CD14-positive monocyte (primary cell): ENCODE measurements at regions of chr1 and their contacts with region 1.

Region 1: DNA sequence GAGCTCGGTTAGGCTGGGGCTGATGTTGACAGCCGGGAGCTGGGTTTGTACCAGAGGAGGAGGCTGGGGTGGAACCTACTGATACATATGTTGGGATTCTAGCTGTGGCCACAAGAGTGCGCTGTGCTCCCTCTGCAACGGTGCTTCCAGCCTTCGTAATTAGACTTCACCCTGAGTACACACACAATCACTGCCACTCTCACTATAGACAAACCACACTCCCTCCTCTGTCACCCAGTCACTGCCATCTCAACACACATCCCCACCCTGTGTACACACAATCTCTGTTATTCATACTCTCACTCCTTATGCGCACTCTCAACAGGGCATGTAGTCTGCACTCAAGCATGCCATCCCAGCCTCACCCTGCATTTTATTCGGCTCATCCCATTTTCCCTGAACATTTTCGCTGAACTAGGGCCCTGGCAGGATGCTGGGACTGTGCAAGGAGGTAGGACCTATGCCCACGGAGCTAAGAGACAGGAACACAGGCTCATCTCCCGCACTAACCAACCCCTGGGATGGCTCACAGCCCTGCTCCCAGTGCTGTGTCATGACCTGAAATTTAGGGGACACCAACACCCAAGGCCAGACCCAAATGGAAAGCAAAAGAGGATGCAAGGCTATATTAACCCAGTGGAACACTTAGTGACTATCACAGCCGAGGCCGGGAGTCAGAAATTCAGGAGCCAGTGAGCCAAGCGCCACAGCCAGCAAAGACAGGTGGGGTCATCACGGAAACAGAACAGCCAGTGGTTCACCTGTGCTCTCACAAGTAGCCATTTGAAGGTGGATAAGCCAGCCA is 5.7 kb downstream of the GJB3 start:
- DNase-seq: peak; percentile 19 to 36 (median 31)
- H3K4me3 ChIP-seq: no peak overlapping the region
- H3K4me3 Mint-ChIP-seq: no peak overlapping the region
- H3K27ac ChIP-seq: no peak overlapping the region
- H3K27ac Mint-ChIP-seq: no peak overlapping the region
- H3K4me1 ChIP-seq: no peaks in the 10 kb centered on the region
- H3K4me1 Mint-ChIP-seq: no peaks in the 10 kb centered on the region
- H3K27me3 ChIP-seq: peaks cover 11 to 19% of the 10 kb centered on the region in 2 donors
- H3K27me3 Mint-ChIP-seq: peaks cover 20 to 34% (median 23%) of the 10 kb centered on the region in 3 donors
- CTCF ChIP-seq: peak; percentile 74

Region 2: GRCh38 chr1:34770891-34771508 is 15.7 kb before region 1 on chr1:
- intact Hi-C with region 1: no loop called
- DNase-seq: no peak
- H3K4me3 ChIP-seq: no peak overlapping the region
- H3K4me3 Mint-ChIP-seq: no peak overlapping the region
- H3K27ac ChIP-seq: no peak overlapping the region
- H3K27ac Mint-ChIP-seq: no peak overlapping the region
- H3K4me1 ChIP-seq: no peaks in the 10 kb centered on the region
- H3K4me1 Mint-ChIP-seq: no peaks in the 10 kb centered on the region
- H3K27me3 ChIP-seq: no peaks in the 10 kb centered on the region
- H3K27me3 Mint-ChIP-seq: peaks cover 0 to 3% (median 2%) of the 10 kb centered on the region in 3 donors
- CTCF ChIP-seq: no peak

Region 3: GRCh38 chr1:34852677-34853217 is 66.0 kb after region 1 on chr1:
- intact Hi-C with region 1: loop called in 1 of 2 experiments (anchors 2 kb)
- DNase-seq: peak; percentile 82 to 90 (median 89)
- H3K4me3 ChIP-seq: no peak overlapping the region
- H3K4me3 Mint-ChIP-seq: no peak overlapping the region
- H3K27ac ChIP-seq: no peak overlapping the region
- H3K27ac Mint-ChIP-seq: peak overlapping the region in 3 of 7 donors; percentile 26 to 55 (median 36)
- H3K4me1 ChIP-seq: peaks cover 1 to 2% of the 10 kb centered on the region in 2 donors
- H3K4me1 Mint-ChIP-seq: peaks cover 10% of the 10 kb centered on the region
- H3K27me3 ChIP-seq: no peaks in the 10 kb centered on the region
- H3K27me3 Mint-ChIP-seq: peaks cover 0 to 3% (median 0%) of the 10 kb centered on the region in 3 donors
- CTCF ChIP-seq: peak; percentile 96

Region 4: GRCh38 chr1:35298464-35298863 is 511.7 kb after region 1 on chr1:
- intact Hi-C with region 1: loop called in 1 of 2 experiments (anchors 5 kb)
- DNase-seq: peak; percentile 18 to 47 (median 44)
- H3K4me3 ChIP-seq: no peak overlapping the region
- H3K4me3 Mint-ChIP-seq: no peak overlapping the region
- H3K27ac ChIP-seq: peak overlapping the region in 1 of 2 donors; percentile 21
- H3K27ac Mint-ChIP-seq: peak overlapping the region in 4 of 7 donors; percentile 21 to 75 (median 52)
- H3K4me1 ChIP-seq: no peaks in the 10 kb centered on the region
- H3K4me1 Mint-ChIP-seq: peaks cover 4% of the 10 kb centered on the region
- H3K27me3 ChIP-seq: no peaks in the 10 kb centered on the region
- H3K27me3 Mint-ChIP-seq: no peaks in the 10 kb centered on the region
- CTCF ChIP-seq: peak; percentile 53